Brain microvascular endothelial cell (primary cell): ENCODE measurements at regions of chr11 and their contacts with region 1.

Region 1: GRCh38 chr11:16945671-16946469 is 68.3 kb downstream of the PLEKHA7 start:
- DNase-seq: peak; percentile 53
- H3K4me3 ChIP-seq: no peak overlapping the region
- H3K27ac ChIP-seq: no peak overlapping the region
- H3K27me3 ChIP-seq: no peaks in the 10 kb centered on the region
- CTCF ChIP-seq: peak; percentile 94

Region 2: GRCh38 chr11:17063171-17064002 is 117.5 kb after region 1 on chr11:
- in situ Hi-C with region 1: loop called (anchors 10 kb)
- DNase-seq: peak; percentile 50
- H3K4me3 ChIP-seq: no peak overlapping the region
- H3K27ac ChIP-seq: no peak overlapping the region
- H3K27me3 ChIP-seq: no peaks in the 10 kb centered on the region
- CTCF ChIP-seq: peak; percentile 97

Region 3: DNA sequence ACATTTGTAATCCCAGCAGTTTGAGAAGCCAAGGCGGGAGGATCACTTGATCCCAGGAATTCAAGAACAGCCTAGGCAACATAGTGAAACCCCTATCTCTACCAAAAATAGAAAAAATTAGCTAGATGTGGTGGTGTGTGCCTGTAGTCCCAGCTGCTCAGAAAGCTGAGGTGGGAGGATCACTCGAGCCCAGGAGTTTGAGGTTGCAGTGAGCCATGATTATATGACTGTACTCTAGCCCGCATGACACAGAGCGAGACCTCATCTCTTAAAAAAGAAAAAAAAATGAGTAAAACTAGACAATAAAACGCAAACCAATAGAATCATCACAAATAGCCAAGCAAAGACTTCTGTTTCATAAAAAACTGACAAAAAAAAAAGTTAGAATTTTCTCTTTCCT is 352.4 kb after region 1 on chr11:
- in situ Hi-C with region 1: no loop called
- DNase-seq: no peak
- H3K4me3 ChIP-seq: no peak overlapping the region
- H3K27ac ChIP-seq: no peak overlapping the region
- H3K27me3 ChIP-seq: no peaks in the 10 kb centered on the region
- CTCF ChIP-seq: no peak

Region 4: DNA sequence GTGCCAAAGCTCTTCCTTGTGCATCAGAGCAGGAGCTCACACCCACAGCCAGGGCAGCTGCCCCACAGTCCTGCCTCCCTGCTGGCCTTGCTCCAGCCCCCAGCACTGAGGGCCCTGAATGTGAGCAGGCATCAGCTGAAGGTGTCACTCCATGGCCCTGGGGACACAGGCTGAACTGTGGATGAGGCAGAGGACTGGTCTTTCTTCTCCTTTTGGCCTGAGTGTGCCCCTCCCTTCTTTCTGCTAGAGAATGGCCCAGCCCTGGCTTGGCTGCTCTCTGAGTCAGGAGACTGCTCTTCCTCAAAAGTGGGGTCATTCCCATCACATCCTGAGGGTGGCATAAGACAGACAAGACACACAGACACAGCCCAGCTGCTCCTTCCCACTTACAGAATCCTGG is 617.4 kb after region 1 on chr11:
- in situ Hi-C with region 1: no loop called
- DNase-seq: no peak
- H3K4me3 ChIP-seq: no peak overlapping the region
- H3K27ac ChIP-seq: no peak overlapping the region
- H3K27me3 ChIP-seq: no peaks in the 10 kb centered on the region
- CTCF ChIP-seq: no peak